PC-3 (cell line): ENCODE measurements at regions of chr14 and their contacts with region 1.

Region 1: GRCh38 chr14:67526676-67527459 is 6.2 kb upstream of the PLEKHH1 start:
- DNase-seq: peak; percentile 63
- ATAC-seq: peak; percentile 87
- H3K4me3 ChIP-seq: no peak overlapping the region
- H3K27ac ChIP-seq: no peak overlapping the region
- H3K4me1 ChIP-seq: no peaks in the 10 kb centered on the region; the same call in 1 of the 2 replicates
- H3K27me3 ChIP-seq: peaks cover 11% of the 10 kb centered on the region; the same call in 1 of the 2 replicates
- CTCF ChIP-seq: peak; percentile 99

Region 2: GRCh38 chr14:67514650-67515385 is 12.1 kb before region 1 on chr14:
- CTCF ChIA-PET with region 1: interaction called, 16 read pairs
- POLR2A ChIA-PET with region 1: no interaction called
- intact Hi-C with region 1: no loop called
- DNase-seq: peak; percentile 35
- ATAC-seq: peak; percentile 61
- H3K4me3 ChIP-seq: peak overlapping the region; percentile 83
- H3K27ac ChIP-seq: no peak overlapping the region
- H3K4me1 ChIP-seq: peaks cover 8% of the 10 kb centered on the region; the same call in 1 of the 2 replicates
- H3K27me3 ChIP-seq: peaks cover 10% of the 10 kb centered on the region; the same call in 1 of the 2 replicates
- CTCF ChIP-seq: no peak

Region 3: GRCh38 chr14:67571272-67571850 is 44.5 kb after region 1 on chr14:
- CTCF ChIA-PET with region 1: interaction called, 126 read pairs
- POLR2A ChIA-PET with region 1: interaction called, 3 read pairs
- intact Hi-C with region 1: loop called (anchors 1 kb)
- DNase-seq: peak; percentile 67
- ATAC-seq: peak; percentile 92
- H3K4me3 ChIP-seq: no peak overlapping the region
- H3K27ac ChIP-seq: no peak overlapping the region
- H3K4me1 ChIP-seq: peaks cover 9% of the 10 kb centered on the region
- H3K27me3 ChIP-seq: no peaks in the 10 kb centered on the region
- CTCF ChIP-seq: peak; percentile 98

Region 4: DNA sequence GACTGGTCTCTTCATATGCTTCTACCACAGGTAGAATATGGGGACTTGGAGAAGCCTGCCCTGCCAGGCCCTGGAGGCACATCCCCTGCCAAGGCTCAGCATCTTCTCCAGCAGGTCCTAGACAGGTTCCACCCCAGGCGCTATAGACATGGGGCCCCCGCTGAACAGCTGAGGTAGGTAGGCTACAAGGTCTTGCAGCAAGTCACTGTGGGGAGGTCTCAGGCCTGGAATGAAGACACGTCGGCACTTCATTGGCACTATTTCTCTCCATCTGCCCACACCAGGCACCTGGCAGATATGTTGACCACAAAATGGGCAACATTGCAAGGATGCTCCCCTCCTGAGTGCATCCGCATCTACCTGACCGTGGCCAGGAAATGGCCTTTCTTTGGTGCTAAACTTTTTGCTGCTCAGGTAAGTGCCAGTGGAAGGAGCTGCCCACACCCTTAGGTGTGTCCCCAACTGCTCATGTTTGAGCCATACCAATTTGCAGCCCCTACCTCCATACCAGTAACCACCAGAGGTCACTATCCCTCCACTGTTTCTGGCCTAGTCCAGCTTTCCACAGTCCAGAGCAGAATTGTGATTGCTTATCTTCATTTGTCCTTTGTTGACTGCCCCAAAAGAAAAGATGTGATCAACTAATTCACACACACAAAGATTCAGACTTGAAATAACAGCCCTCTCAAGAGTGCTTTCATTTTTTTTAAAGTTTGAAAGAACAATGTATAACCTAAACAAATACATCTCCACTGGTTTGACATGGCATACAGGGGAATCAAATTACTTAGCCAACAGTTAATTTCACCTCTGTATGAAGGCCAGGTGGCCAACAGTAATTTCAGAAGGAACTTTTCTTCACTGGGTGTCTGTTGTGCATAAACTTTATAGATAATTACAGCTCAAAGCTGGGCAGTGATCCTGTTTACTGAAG is 57.1 kb after region 1 on chr14:
- CTCF ChIA-PET with region 1: interaction called, 16 read pairs
- POLR2A ChIA-PET with region 1: no interaction called
- intact Hi-C with region 1: no loop called
- DNase-seq: peak; percentile 72
- ATAC-seq: peak; percentile 99
- H3K4me3 ChIP-seq: no peak overlapping the region
- H3K27ac ChIP-seq: no peak overlapping the region
- H3K4me1 ChIP-seq: no peaks in the 10 kb centered on the region
- H3K27me3 ChIP-seq: no peaks in the 10 kb centered on the region
- CTCF ChIP-seq: peak; percentile 93

Region 5: DNA sequence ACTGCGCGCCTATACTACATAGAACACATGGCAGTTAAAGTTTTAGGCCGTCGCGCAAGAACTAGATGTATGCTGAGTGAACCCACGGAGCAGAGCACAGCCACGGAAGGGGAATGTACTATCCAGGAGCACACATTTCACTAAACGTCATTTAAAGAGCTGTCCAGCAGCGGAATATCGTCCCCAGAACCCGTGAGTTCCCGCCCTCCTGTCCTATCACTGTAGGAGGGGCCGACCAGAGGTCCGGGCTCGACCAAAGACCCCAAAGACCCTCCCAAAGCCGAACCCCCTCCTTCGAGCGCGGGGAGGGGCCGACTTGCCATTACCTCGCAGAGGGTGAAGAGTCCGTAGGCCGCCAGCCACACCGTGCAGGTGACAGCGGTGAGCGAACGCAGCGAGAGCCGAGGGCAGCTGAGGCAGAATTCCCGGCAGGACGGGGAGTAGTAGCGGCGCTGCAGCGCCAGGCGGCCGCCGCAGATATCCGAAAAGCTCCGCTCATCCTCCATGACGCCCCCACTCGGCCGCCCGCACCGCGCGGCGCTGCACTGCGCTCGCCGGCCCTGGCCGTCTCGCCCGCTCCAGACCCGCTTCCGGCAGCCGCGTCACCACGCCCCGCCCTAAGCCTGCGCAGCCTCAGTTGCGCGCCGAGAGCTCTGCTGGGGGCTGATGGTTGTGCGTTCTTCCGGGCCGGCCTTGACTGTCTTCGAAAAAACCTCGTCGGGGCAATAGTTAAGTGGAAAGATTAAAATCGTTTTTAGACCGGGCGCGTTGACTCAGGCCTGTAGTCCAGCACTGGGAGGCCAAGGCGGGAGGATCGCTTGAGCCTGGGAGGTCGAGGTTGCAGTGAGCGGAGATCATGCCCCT is 73.1 kb after region 1 on chr14 and contains the start of gene PIGH:
- CTCF ChIA-PET with region 1: interaction called, 11 read pairs
- POLR2A ChIA-PET with region 1: no interaction called
- intact Hi-C with region 1: no loop called
- DNase-seq: peak; percentile 88
- ATAC-seq: peak; percentile 97
- H3K4me3 ChIP-seq: peak within 1 kb of the TSS; percentile 91
- H3K27ac ChIP-seq: peak within 1 kb of the TSS; percentile 39
- H3K4me1 ChIP-seq: peaks cover 14% of the 10 kb centered on the region; the same call in 1 of the 2 replicates
- H3K27me3 ChIP-seq: no peaks in the 10 kb centered on the region
- CTCF ChIP-seq: peak; percentile 63
- total RNA-seq, gene PIGH: 63.8 and 66.4 TPM in 2 replicates

Region 6: GRCh38 chr14:67666750-67667449 is 140.0 kb after region 1 on chr14:
- CTCF ChIA-PET with region 1: interaction called, 7 read pairs
- POLR2A ChIA-PET with region 1: interaction called, 4 read pairs
- intact Hi-C with region 1: loop called (anchors 5 kb)
- DNase-seq: peak; percentile 69
- ATAC-seq: peak; percentile 90
- H3K4me3 ChIP-seq: no peak overlapping the region
- H3K27ac ChIP-seq: no peak overlapping the region
- H3K4me1 ChIP-seq: no peaks in the 10 kb centered on the region
- H3K27me3 ChIP-seq: no peaks in the 10 kb centered on the region
- CTCF ChIP-seq: peak; percentile 86